ENCODE measurements at regions of chr12 and their contacts with region 1.

Region 1: GRCh38 chr12:21657326-21658077 is at the start of gene LDHB:
- DNase-seq: peak; percentile 99
- ATAC-seq: peak; percentile 97
- H3K4me3 Mint-ChIP-seq: peak within 1 kb of the TSS; percentile 81
- H3K27ac Mint-ChIP-seq: peak within 1 kb of the TSS; percentile 98
- H3K4me1 Mint-ChIP-seq: peaks cover 41% of the 10 kb centered on the region
- H3K27me3 Mint-ChIP-seq: no peaks in the 10 kb centered on the region
- CTCF ChIP-seq: no peak
- total RNA-seq, gene LDHB: 2,161 to 2,384 TPM

Region 2: DNA sequence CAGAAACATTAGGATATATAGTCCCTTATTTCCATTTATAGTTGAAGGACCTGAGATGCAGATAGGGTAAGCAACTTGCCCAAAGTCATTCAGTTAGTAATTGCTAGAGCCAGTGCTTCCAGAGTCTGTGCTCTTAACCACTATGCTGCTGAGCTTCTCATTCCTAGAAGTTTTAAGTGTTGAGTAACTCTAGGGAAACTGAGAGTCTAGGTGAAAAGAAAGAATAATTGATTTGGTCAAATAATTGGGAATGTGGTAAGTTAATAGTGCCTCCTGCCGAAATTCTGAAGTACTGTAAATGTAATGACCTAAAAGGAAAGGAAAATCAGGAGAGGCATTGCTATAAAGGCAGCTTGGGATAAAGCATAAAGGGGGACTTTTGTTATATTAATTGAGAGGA is 206.0 kb before region 1 on chr12:
- CTCF ChIA-PET with region 1: no interaction called
- POLR2A ChIA-PET with region 1: interaction called, 6 read pairs
- intact Hi-C with region 1: loop called (anchors 10 kb)
- DNase-seq: no peak
- ATAC-seq: no peak
- H3K4me3 Mint-ChIP-seq: no peak overlapping the region
- H3K27ac Mint-ChIP-seq: no peak overlapping the region
- H3K4me1 Mint-ChIP-seq: peaks cover 30% of the 10 kb centered on the region
- H3K27me3 Mint-ChIP-seq: no peaks in the 10 kb centered on the region
- CTCF ChIP-seq: no peak

Region 3: DNA sequence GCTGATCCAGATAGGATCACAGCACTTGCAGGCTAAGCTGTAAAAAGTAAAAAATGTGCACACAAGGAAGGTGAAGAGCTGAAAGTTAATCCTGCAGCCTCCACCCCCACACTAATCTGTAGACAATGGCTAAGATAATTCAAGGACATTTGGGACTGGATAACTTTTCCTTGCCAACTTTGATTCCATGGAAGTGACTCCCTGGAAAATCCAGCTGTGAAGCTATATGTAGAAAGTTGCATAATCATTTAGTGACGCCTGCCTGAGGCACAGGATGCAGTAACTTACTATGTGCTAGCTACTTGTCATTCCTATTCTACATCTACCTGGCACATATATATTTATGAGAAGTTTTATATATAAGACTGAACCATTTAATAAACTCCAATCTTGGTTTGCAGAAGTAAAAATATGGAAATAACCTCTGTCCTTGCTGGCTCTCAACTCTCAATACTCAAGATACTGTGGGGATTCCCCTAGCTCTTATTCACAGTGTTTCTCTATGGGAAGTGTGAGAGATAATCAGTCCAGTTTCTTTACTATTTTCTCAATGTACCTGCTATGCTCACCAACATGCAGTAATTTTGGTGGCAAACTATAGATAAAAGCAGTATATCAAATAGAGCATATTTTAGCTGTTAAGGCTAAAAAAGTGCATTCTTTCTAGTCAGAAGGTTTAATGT is 14.7 kb before region 1 on chr12:
- CTCF ChIA-PET with region 1: interaction called, 3 read pairs
- POLR2A ChIA-PET with region 1: interaction called, 35 read pairs
- intact Hi-C with region 1: no loop called
- DNase-seq: no peak
- ATAC-seq: peak; percentile 65
- H3K4me3 Mint-ChIP-seq: no peak overlapping the region
- H3K27ac Mint-ChIP-seq: peak overlapping the region; percentile 81
- H3K4me1 Mint-ChIP-seq: peaks cover 82% of the 10 kb centered on the region
- H3K27me3 Mint-ChIP-seq: no peaks in the 10 kb centered on the region
- CTCF ChIP-seq: no peak

Region 4: DNA sequence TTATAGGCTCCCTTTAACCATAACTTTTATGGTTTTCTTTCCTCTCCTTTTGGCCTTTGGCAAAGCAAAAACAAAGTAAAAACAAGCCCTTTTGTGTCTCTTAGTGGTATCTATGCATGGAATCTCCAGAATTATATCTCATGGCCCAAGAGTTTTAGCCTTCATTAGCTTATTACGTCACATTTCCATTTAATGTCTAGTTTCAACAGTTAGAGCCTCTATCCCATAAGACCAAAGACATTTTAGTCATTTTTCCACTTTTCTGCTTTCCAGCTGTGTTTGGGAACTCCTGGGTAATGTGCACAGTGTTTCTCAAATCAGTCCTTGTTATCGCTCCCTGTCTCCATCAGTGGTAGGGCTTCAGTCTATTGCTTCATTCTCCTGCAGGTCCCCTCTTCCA is 12.8 kb after region 1 on chr12:
- CTCF ChIA-PET with region 1: interaction called, 3 read pairs
- POLR2A ChIA-PET with region 1: interaction called, 12 read pairs
- intact Hi-C with region 1: no loop called
- DNase-seq: no peak
- ATAC-seq: no peak
- H3K4me3 Mint-ChIP-seq: no peak overlapping the region
- H3K27ac Mint-ChIP-seq: no peak overlapping the region
- H3K4me1 Mint-ChIP-seq: no peaks in the 10 kb centered on the region
- H3K27me3 Mint-ChIP-seq: no peaks in the 10 kb centered on the region
- CTCF ChIP-seq: no peak

Region 5: DNA sequence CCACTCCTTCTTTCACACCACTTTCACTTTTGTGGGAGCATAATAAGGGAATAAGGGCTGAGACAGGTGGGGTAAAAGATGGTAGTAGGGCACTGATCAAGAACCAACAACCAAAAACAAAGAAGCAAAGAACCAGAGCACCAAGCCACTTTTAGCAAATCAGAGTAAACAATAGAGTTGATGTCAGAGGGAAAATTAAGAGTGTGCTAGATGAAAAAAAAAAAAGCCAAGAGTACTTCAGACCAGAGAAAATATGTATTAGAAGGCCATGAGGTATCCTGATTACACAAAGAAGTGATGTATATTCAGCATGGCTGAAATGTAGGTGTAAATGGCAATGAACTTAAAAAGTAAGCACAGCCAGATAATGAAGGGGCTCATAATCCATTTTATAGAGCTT is 208.3 kb after region 1 on chr12:
- CTCF ChIA-PET with region 1: no interaction called
- POLR2A ChIA-PET with region 1: no interaction called
- intact Hi-C with region 1: no loop called
- DNase-seq: no peak
- ATAC-seq: no peak
- H3K4me3 Mint-ChIP-seq: no peak overlapping the region
- H3K27ac Mint-ChIP-seq: no peak overlapping the region
- H3K4me1 Mint-ChIP-seq: no peaks in the 10 kb centered on the region
- H3K27me3 Mint-ChIP-seq: no peaks in the 10 kb centered on the region
- CTCF ChIP-seq: no peak

Measured in activated CD8-positive, alpha-beta T cell treated with anti-CD3 and anti-CD28 coated beads for 36 hours (primary cell).